Ascending aorta (tissue), 2 donors: ENCODE measurements at regions of chr15 and their contacts with region 1.

Region 1: GRCh38 chr15:66700802-66701421 is 1.1 kb upstream of the SMAD6 start:
- DNase-seq: peak; percentile 89 to 98
- H3K4me3 ChIP-seq: peak overlapping the region; percentile 88
- H3K27ac ChIP-seq: peak overlapping the region; percentile 84 to 87
- H3K4me1 ChIP-seq: peaks cover 3 to 9% of the 10 kb centered on the region in 2 donors
- H3K27me3 ChIP-seq: no peaks in the 10 kb centered on the region
- CTCF ChIP-seq: no peak

Region 2: GRCh38 chr15:66504563-66505429 is 196.1 kb before region 1 on chr15 and contains the starts of genes RPL4 and ZWILCH:
- intact Hi-C with region 1: loop called (anchors 10 kb)
- DNase-seq: peak; percentile 22 to 89
- H3K4me3 ChIP-seq: peak within 1 kb of the TSS; percentile 82 to 87
- H3K27ac ChIP-seq: peak within 1 kb of the TSS; percentile 93 to 96
- H3K4me1 ChIP-seq: peaks cover 9 to 21% of the 10 kb centered on the region in 2 donors
- H3K27me3 ChIP-seq: no peaks in the 10 kb centered on the region
- CTCF ChIP-seq: no peak
- total RNA-seq, gene RPL4: 2,799 TPM
- total RNA-seq, gene ZWILCH: 2.3 TPM

Region 3: DNA sequence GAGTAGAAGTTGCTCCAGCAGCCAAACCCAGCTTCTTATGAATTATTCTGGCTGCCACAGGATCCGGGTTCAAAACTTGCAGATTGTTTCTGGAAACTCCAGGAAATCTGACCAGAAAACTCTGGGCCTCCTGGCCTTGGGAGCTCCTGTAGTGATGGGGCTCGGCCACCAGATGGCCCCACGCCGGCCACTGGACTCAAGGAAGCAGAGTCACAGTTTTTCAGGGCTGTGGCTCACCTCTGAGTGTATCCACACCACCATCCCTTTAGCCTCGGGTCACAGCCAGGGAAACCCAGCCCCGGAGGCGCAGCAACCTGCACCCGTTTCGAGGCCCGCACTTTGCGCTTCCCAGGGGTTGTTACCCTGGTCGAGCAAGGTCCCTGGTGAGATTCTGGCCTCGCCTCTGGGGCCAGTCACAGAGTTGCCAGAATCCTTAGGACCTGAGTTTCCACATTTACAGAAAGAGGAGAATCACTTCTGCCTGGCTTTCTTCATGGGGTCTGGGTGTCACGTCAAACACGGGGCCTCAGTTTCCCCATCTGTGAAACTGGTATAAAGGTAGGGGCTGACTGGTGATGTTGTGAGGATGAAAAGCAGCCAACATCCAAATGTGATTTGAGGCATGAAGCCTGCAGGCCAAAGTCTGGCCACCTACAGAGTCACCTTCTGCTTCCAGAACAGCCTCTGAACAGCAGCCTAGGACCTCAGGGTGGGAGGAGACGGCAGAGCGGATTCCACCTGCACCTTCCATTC is 81.6 kb before region 1 on chr15:
- intact Hi-C with region 1: loop called (anchors 1 kb)
- DNase-seq: peak in 1 of 2 donors; percentile 89
- H3K4me3 ChIP-seq: no peak overlapping the region
- H3K27ac ChIP-seq: peak overlapping the region; percentile 94
- H3K4me1 ChIP-seq: peaks cover 25 to 46% of the 10 kb centered on the region in 2 donors
- H3K27me3 ChIP-seq: no peaks in the 10 kb centered on the region
- CTCF ChIP-seq: peak; percentile 85 to 96 (median 92)

Region 4: DNA sequence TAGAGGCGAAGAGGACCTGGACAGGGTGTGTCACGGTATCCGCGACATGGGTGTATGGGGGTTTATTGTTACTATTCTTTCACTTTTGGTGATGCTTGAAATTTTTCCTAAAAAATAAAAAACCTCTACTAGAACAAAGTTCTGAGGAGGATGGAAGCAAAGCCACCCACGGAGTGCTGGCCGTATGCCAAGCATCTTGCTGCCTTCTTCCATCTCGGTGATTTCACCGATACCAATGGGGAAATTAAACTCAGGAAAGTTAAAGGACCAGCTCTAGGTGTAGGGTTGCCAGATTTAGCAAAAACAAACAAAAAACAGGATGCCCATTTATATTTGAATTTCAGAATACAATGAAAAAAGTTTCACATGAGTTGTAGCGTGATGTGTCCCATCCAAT is 35.0 kb after region 1 on chr15:
- intact Hi-C with region 1: loop called (anchors 5 kb)
- DNase-seq: no peak
- H3K4me3 ChIP-seq: no peak overlapping the region
- H3K27ac ChIP-seq: peak overlapping the region; percentile 89
- H3K4me1 ChIP-seq: peaks cover 13 to 60% of the 10 kb centered on the region in 2 donors
- H3K27me3 ChIP-seq: no peaks in the 10 kb centered on the region
- CTCF ChIP-seq: no peak

Region 5: DNA sequence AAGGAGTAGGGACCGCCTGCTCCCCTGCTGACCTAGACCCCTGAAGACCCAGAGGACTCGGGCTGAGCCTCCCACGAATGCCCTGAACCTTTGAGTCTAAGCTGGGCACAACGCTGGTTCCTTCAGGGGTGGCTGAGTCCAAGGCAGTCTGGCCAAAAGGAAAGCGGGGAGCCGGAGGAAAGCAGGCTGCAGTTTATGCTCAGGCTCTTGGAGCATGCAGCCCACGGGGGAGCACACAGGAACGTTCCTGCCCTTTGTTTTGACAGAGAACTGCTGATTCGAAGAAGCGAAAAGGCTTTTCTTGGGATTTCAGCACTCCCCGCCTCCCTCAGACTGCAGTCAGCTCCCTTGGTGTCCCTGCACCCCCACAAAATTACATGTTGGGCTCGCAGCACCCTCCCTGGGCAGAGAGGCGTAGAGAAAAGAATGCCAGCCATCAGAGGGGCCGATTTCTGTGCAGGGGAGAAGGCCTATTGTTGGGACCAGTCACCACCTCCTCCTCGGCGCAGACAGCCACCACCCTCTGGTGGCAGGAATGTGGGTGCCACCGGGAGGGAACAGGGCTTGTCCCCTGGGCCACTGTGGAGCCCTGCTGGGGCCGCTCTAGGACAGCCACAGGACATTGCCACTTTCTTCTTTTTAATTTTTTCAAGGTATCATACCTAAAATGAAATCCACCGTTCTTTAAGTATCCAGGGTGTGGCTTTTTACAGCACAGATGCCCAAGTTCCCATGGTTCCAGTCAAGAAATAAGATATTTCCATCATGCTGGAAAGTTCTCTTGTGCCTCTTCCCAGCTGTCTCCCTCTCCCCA is 73.3 kb after region 1 on chr15:
- intact Hi-C with region 1: loop called (anchors 1 kb)
- DNase-seq: peak; percentile 44 to 95
- H3K4me3 ChIP-seq: no peak overlapping the region
- H3K27ac ChIP-seq: peak overlapping the region; percentile 75 to 77
- H3K4me1 ChIP-seq: peaks cover 14 to 47% of the 10 kb centered on the region in 2 donors
- H3K27me3 ChIP-seq: no peaks in the 10 kb centered on the region
- CTCF ChIP-seq: peak; percentile 96 to 99 (median 99)

Region 6: GRCh38 chr15:66851226-66852071 is 150.5 kb after region 1 on chr15:
- intact Hi-C with region 1: loop called (anchors 1 kb)
- DNase-seq: peak in 1 of 2 donors; percentile 93
- H3K4me3 ChIP-seq: peak overlapping the region in 1 of 2 donors; percentile 1
- H3K27ac ChIP-seq: peak overlapping the region; percentile 91 to 94
- H3K4me1 ChIP-seq: peaks cover 19 to 32% of the 10 kb centered on the region in 2 donors
- H3K27me3 ChIP-seq: no peaks in the 10 kb centered on the region
- CTCF ChIP-seq: peak; percentile 97

Region 7: GRCh38 chr15:67196672-67197363 is 495.9 kb after region 1 on chr15:
- intact Hi-C with region 1: loop called (anchors 10 kb)
- DNase-seq: no peak
- H3K4me3 ChIP-seq: no peak overlapping the region
- H3K27ac ChIP-seq: peak overlapping the region; percentile 27 to 64
- H3K4me1 ChIP-seq: peaks cover 3 to 50% of the 10 kb centered on the region in 2 donors
- H3K27me3 ChIP-seq: no peaks in the 10 kb centered on the region
- CTCF ChIP-seq: no peak